Common myeloid progenitor, CD34-positive (primary cell): ENCODE measurements at regions of chr14 and their contacts with region 1.

Region 1: GRCh38 chr14:75088574-75089373 is 19.3 kb downstream of the ZC2HC1C start:
- DNase-seq: peak; percentile 50 to 71 (median 64)
- H3K4me3 ChIP-seq: no peak overlapping the region
- H3K27ac ChIP-seq: no peak overlapping the region
- H3K4me1 ChIP-seq: no peaks in the 10 kb centered on the region
- H3K27me3 ChIP-seq: no peaks in the 10 kb centered on the region

Region 2: GRCh38 chr14:74860906-74861733 is 227.7 kb before region 1 on chr14:
- CTCF ChIA-PET with region 1: interaction called, 76 read pairs
- POLR2A ChIA-PET with region 1: interaction called, 3 read pairs
- DNase-seq: peak; percentile 81 to 90 (median 82)
- H3K4me3 ChIP-seq: no peak overlapping the region
- H3K27ac ChIP-seq: no peak overlapping the region
- H3K4me1 ChIP-seq: peaks cover 6 to 24% (median 17%) of the 10 kb centered on the region in 4 experiments
- H3K27me3 ChIP-seq: no peaks in the 10 kb centered on the region

Region 3: DNA sequence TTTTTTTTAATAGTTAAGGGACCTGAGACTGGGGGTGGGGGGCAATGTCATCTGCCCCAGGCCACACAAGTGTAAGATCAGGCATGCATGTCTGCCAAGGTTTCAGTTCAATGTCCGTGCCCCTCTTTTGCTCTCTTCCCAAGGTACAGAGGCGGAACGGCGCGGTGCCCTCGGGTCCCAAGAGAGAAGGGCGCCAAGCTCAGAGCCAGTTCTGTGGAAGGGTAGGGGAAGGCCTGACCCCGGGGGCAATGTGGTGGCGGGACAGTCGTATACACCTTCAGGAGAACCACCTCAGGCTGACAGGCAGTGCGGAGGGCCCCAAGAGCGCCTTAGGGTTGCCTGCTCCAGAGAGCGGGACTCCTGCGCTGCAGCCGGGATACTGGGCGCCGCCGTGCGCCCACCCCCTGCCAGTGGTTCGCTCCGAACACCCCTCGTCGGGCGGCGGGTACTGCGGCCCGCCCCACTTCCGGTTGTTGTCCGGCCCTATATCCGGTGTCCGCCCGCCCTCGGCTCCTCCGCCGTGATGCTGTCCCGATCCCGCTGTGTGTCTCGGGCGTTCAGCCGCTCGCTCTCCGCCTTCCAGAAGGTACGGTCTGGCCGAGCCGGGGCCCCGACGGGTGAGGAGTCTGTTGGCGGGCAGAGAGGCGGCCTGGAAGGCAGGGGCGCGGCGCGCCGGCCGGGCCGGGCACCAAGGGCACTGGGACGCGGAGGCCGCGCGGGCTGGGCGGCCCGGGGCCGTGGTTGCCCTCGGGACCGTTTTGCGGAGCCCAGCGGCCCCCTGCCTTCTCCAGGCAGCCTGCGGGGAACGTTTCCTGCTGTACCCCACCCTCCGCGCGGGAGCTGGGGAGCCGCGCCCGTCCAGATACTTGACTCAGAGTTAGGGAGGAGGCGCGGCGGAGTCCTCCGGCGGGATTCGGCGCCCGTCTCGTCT is 207.1 kb before region 1 on chr14 and contains the start of gene DLST:
- CTCF ChIA-PET with region 1: interaction called, 10 read pairs
- POLR2A ChIA-PET with region 1: no interaction called
- DNase-seq: peak; percentile 83 to 89 (median 88)
- H3K4me3 ChIP-seq: peak within 1 kb of the TSS; percentile 83 to 99 (median 96)
- H3K27ac ChIP-seq: peak within 1 kb of the TSS; percentile 86 to 88
- H3K4me1 ChIP-seq: peaks cover 14 to 41% (median 33%) of the 10 kb centered on the region in 4 experiments
- H3K27me3 ChIP-seq: no peaks in the 10 kb centered on the region

Region 4: DNA sequence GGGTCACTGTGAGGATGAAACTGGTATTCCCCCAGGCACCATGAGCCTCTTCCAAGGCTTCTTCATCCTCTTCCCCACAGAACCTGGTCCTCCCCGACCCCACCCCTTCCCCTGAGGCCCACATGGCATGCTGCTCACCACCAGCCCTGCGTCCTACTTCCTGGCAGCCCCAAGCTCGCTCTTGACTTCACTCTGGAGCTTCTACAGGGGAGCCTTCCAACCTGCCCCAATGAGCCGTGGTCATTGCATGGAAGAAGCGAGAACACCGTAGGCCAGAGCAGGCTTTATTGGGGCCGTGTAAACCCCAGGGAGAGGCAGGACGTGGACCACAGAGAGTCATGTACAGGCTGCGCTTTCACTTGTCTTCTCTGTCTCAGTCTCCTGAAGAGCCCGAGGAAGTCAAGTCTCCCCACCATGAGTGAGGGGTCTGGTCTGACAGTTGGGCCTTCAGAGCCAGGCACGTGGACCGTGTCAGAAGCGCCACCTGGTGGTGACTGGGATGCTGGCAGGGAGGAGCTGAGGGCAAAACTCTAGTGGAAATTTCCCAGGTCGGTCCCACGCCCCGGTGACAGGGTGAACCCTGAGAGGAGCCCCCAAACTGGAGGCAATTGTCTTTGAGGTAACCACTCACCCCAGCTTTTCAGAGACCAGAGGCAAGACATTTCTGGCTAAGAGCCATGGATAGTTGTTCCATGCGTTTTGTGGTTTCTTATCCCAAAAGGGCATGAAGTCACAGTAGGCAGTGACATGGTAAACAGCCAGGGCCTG is 183.2 kb before region 1 on chr14:
- CTCF ChIA-PET with region 1: interaction called, 86 read pairs
- POLR2A ChIA-PET with region 1: no interaction called
- DNase-seq: peak; percentile 66 to 78 (median 74)
- H3K4me3 ChIP-seq: no peak overlapping the region
- H3K27ac ChIP-seq: no peak overlapping the region
- H3K4me1 ChIP-seq: peaks cover 0 to 23% (median 17%) of the 10 kb centered on the region in 4 experiments
- H3K27me3 ChIP-seq: no peaks in the 10 kb centered on the region

Region 5: DNA sequence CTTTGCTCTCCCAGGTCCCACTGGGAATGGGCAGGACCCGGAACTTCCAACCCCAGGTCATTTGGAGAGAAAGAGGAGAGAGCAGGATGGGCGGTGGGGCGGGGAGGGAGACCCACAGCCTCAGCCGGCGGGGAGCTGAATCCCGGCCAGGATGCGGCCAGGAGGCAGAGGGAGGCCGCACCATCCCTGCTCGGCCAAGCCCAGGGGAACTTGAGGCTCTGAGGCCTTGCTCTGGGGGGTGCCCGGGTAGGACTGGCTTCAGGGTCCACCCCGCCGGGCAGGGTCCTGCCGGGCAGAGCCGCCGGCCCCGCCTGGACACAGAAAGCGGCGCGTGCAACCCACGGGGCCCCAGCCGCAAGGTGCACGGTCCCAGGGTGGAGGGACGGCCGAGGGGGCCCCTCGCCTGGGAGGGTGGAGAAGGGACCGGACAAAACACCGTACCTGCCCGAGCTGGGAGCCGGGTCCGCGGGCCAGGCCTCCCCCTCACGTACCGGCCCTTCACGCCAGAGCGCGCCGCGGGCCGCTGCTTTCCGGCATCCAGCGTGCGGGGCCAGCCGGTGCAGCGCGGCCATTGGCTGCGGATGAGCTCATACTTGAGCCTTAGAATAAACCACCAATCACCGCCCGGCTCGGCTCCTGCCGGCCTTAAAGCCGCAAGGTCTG is 165.9 kb before region 1 on chr14 and contains the start of gene RPS6KL1:
- CTCF ChIA-PET with region 1: interaction called, 18 read pairs
- POLR2A ChIA-PET with region 1: no interaction called
- DNase-seq: peak; percentile 81 to 89 (median 87)
- H3K4me3 ChIP-seq: peak within 1 kb of the TSS; percentile 4 to 74 (median 66)
- H3K27ac ChIP-seq: no peak within 1 kb of the TSS
- H3K4me1 ChIP-seq: peaks cover 0 to 6% (median 3%) of the 10 kb centered on the region in 4 experiments
- H3K27me3 ChIP-seq: no peaks in the 10 kb centered on the region

Region 6: DNA sequence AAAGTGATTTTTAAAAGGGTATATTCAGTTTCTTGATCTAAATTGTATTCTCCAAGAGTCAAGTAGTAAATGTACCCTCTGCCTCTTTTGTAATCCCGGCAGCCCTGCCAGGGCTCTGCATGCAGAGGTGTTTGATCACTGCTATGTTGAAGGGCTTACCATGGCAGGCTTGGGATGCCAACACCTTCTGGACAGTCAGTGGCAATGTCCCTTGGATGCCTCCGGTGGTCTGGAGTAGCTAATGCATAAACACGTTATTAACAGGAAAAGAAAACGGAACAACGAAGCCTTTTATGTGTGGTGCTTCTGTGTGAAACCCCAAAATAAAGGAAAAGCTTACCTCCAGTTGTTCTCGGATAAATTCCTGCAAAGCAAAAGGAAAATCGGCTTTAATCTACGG is 66.1 kb before region 1 on chr14:
- CTCF ChIA-PET with region 1: interaction called, 21 read pairs
- POLR2A ChIA-PET with region 1: no interaction called
- DNase-seq: peak; percentile 22 to 44 (median 43)
- H3K4me3 ChIP-seq: no peak overlapping the region
- H3K27ac ChIP-seq: no peak overlapping the region
- H3K4me1 ChIP-seq: peaks cover 0 to 9% (median 8%) of the 10 kb centered on the region in 4 experiments
- H3K27me3 ChIP-seq: no peaks in the 10 kb centered on the region

Region 7: DNA sequence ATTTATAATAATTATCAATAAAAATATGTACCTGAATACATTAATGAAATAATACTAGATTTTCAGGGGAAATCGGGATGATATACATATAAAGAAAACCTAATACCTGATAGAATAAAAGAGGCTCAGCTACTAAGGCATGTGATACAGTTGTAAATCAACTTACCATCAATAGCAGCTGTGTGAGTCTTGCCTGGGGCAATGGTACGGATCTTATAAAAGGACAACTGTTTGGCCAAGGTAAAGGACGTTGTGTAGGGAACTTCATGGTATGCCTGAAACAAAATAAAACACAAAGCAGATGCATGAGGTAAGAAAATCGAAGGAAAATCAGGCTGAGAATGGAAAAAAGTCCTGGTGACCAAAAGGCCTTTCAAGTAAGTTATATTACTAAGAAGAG is 12.7 kb after region 1 on chr14:
- CTCF ChIA-PET with region 1: interaction called, 42 read pairs
- POLR2A ChIA-PET with region 1: no interaction called
- DNase-seq: no peak
- H3K4me3 ChIP-seq: no peak overlapping the region
- H3K27ac ChIP-seq: no peak overlapping the region
- H3K4me1 ChIP-seq: no peaks in the 10 kb centered on the region
- H3K27me3 ChIP-seq: no peaks in the 10 kb centered on the region